Heart right ventricle (tissue), 16 donors: ENCODE measurements at regions of chrX and their contacts with region 1.

Region 1: GRCh38 chrX:132740316-132741123 is 217.9 kb downstream of the HS6ST2 start:
- DNase-seq: no peak
- ATAC-seq: no peak
- H3K4me3 ChIP-seq: no peak overlapping the region
- H3K27ac ChIP-seq: no peak overlapping the region
- H3K4me1 ChIP-seq: no peaks in the 10 kb centered on the region
- H3K27me3 ChIP-seq: peaks cover 0 to 50% (median 0%) of the 10 kb centered on the region in 7 donors
- CTCF ChIP-seq: peak; percentile 30 to 63 (median 50)

Region 2: DNA sequence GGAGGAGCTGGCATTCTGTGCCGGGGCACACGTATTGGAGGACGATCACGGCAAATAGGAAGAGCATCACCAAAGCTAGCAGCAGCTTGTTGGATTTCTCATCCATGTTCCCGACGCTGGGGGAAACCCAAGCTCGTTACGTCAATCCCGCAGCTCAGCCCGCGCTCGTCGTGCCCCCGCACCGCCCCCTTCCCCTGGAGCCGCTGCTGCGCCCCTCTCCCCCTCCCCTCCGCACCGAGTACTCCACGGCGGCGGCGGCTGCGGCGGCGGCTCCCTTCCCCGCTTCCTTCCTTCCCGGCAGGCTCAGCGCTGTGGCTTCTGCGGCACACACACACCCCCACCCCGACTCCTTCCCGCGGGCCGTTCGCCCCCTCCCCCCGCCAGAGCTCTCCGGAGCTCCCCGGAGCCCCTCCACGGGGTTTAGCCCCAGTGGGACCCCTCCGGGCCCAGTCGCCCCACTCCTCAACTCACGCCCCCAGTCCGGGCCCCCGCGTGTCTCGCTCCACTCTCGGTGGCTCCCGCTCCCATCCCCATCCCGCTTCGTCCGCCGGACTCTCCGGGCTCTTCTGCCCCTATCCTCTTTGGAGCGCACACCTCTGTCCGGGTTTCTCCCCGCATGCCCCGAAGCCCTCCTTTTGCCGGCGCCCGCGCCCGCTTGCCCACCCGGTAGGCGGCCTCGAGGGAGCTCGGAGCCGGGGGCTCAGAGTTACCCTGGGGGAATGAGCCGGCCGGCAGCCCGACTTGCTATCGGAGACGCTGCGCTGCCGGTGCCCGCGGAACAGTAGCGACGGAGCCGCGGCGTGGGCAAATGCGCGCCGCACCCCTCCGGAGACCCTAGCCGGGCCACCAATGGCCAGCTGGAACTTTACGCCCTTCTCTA is 216.9 kb after region 1 on chrX:
- intact Hi-C with region 1: loop called in 3 of 10 experiments (anchors 10 kb)
- DNase-seq: peak in 1 of 2 donors; percentile 6
- ATAC-seq: peak in 5 of 8 donors; percentile 12 to 48 (median 38)
- H3K4me3 ChIP-seq: peak overlapping the region in 9 of 10 donors; percentile 28 to 55 (median 45)
- H3K27ac ChIP-seq: no peak overlapping the region
- H3K4me1 ChIP-seq: peaks cover 0 to 26% (median 5%) of the 10 kb centered on the region in 9 donors
- H3K27me3 ChIP-seq: peaks cover 0 to 88% (median 31%) of the 10 kb centered on the region in 7 donors
- CTCF ChIP-seq: no peak

Region 3: GRCh38 chrX:132968296-132968949 is 227.9 kb after region 1 on chrX:
- intact Hi-C with region 1: loop called in 1 of 10 experiments (anchors 10 kb)
- DNase-seq: no peak
- ATAC-seq: no peak
- H3K4me3 ChIP-seq: no peak overlapping the region
- H3K27ac ChIP-seq: no peak overlapping the region
- H3K4me1 ChIP-seq: no peaks in the 10 kb centered on the region
- H3K27me3 ChIP-seq: peaks cover 0 to 78% (median 0%) of the 10 kb centered on the region in 7 donors
- CTCF ChIP-seq: no peak